Naive thymus-derived CD4-positive, alpha-beta T cell (primary cell): ENCODE measurements at regions of chr1 and their contacts with region 1.

Region 1: GRCh38 chr1:66331657-66332547 is 202.1 kb upstream of the SGIP1 start:
- DNase-seq: peak; percentile 20 to 55 (median 39)
- ATAC-seq: peak; percentile 35
- H3K4me3 ChIP-seq: peak overlapping the region; percentile 86
- H3K4me3 Mint-ChIP-seq: peak overlapping the region; percentile 90 to 99 (median 98)
- H3K27ac ChIP-seq: peak overlapping the region; percentile 92
- H3K27ac Mint-ChIP-seq: peak overlapping the region; percentile 95 to 100 (median 98)
- H3K4me1 ChIP-seq: peaks cover 31 to 36% of the 10 kb centered on the region in 2 donors
- H3K4me1 Mint-ChIP-seq: peaks cover 26 to 76% (median 58%) of the 10 kb centered on the region in 7 donors
- H3K27me3 ChIP-seq: no peaks in the 10 kb centered on the region
- H3K27me3 Mint-ChIP-seq: no peaks in the 10 kb centered on the region

Region 2: DNA sequence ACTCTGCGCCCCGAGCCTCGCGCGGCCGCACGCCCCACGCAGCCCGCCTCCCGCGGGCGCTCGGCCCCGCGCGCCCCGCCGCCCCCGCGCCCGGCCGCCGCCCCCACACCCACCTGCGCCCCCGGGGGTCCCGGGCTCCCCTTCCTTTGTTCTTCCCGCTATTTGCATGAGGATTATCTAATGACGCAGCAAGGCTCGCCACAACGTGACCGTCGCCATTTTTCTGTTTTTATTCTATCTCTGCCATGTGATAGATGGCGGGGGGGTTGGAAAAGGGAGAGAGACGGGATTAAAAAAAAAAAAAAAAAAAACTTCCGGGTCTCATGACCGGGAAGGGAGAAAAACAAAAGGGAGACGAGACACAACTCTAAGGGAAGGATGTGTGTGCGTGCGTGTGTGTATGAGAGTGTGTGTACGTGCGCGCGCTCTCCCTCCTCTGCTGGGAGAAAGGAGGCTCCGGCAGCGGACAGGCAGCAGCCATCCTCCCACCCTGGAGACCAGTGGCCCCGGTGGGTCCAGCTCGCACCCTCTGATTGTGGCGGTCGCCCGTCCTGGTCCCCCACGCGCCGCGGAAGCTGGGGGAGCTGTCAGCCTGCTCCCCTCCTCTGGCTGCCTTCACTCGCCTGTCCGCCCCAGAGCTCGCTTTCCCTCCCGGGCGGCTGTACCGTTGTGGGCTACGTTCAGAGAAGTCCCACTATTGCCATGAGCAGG is 1264.3 kb before region 1 on chr1:
- CTCF ChIA-PET with region 1: no interaction called
- POLR2A ChIA-PET with region 1: interaction called, 3 read pairs
- intact Hi-C with region 1: loop called in 1 of 2 experiments (anchors 10 kb)
- DNase-seq: peak; percentile 48 to 75 (median 67)
- ATAC-seq: peak; percentile 39
- H3K4me3 ChIP-seq: peak overlapping the region; percentile 78
- H3K4me3 Mint-ChIP-seq: peak overlapping the region; percentile 85 to 99 (median 97)
- H3K27ac ChIP-seq: peak overlapping the region; percentile 90
- H3K27ac Mint-ChIP-seq: peak overlapping the region; percentile 93 to 100 (median 100)
- H3K4me1 ChIP-seq: peaks cover 16 to 24% of the 10 kb centered on the region in 2 donors
- H3K4me1 Mint-ChIP-seq: peaks cover 43 to 62% (median 55%) of the 10 kb centered on the region in 7 donors
- H3K27me3 ChIP-seq: no peaks in the 10 kb centered on the region
- H3K27me3 Mint-ChIP-seq: no peaks in the 10 kb centered on the region

Region 3: DNA sequence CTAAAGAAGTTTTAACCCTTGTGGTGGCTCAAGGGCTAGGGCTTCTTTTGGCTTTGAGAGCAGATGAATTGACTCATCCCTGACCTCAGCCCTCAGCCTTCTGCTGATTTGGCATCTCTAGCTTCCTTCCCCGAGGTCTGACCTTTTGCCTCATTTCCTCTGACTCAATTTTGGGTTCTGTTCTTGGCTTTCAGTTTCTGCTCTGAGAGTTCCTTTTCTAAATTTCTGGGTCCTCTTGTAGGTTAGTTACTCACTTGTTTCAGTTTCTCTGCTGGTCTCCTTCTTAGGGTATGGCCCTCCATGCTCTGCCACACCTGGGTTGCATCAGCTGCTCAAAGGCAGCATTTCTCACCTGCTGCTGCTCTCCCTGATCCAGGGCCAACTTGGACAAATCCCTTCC is 519.8 kb before region 1 on chr1:
- CTCF ChIA-PET with region 1: no interaction called
- POLR2A ChIA-PET with region 1: no interaction called
- intact Hi-C with region 1: loop called in 1 of 2 experiments (anchors 5 kb)
- DNase-seq: peak in 1 of 9 donors; percentile 67
- ATAC-seq: peak; percentile 94
- H3K4me3 ChIP-seq: no peak overlapping the region
- H3K4me3 Mint-ChIP-seq: peak overlapping the region in 1 of 10 donors; percentile 3
- H3K27ac ChIP-seq: no peak overlapping the region
- H3K27ac Mint-ChIP-seq: peak overlapping the region in 1 of 9 donors; percentile 67
- H3K4me1 ChIP-seq: no peaks in the 10 kb centered on the region
- H3K4me1 Mint-ChIP-seq: peaks cover 0 to 26% (median 0%) of the 10 kb centered on the region in 7 donors
- H3K27me3 ChIP-seq: no peaks in the 10 kb centered on the region
- H3K27me3 Mint-ChIP-seq: peaks cover 18 to 24% (median 19%) of the 10 kb centered on the region in 5 donors

Region 4: DNA sequence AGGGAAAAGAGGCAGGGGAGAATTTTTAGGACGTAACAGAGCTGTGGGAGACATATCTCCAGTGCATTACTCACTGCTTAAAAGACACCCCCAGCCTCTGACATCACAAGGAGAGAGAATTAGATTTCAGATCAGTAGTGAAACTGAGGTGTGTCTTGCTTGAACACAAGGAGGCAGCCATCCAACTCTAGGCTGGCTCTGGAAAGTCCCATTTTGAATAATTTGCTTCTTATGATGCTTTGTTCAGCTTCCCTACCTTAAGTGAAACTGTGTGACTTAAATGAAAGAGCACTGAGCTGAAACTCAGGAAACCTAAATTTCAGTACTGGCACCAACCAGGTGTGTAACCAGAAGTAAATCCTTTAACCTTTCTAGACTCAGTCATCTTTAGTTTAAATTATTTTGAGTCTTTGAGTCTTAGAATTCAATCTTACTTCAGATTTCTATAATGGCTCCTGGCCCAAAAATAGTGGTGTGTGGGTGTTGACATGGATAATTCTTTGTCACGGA is 49.5 kb before region 1 on chr1:
- CTCF ChIA-PET with region 1: interaction called, 12 read pairs
- POLR2A ChIA-PET with region 1: interaction called, 97 read pairs
- intact Hi-C with region 1: loop called (anchors 1 kb)
- DNase-seq: peak in 8 of 9 donors; percentile 49 to 88 (median 68)
- ATAC-seq: peak; percentile 95
- H3K4me3 ChIP-seq: no peak overlapping the region
- H3K4me3 Mint-ChIP-seq: peak overlapping the region in 4 of 10 donors; percentile 12 to 57 (median 25)
- H3K27ac ChIP-seq: peak overlapping the region; percentile 64
- H3K27ac Mint-ChIP-seq: peak overlapping the region; percentile 70 to 93 (median 85)
- H3K4me1 ChIP-seq: peaks cover 49 to 59% of the 10 kb centered on the region in 2 donors
- H3K4me1 Mint-ChIP-seq: peaks cover 57 to 98% (median 89%) of the 10 kb centered on the region in 7 donors
- H3K27me3 ChIP-seq: no peaks in the 10 kb centered on the region
- H3K27me3 Mint-ChIP-seq: no peaks in the 10 kb centered on the region

Region 5: GRCh38 chr1:66374561-66375111 is 42.7 kb after region 1 on chr1:
- CTCF ChIA-PET with region 1: interaction called, 3 read pairs
- POLR2A ChIA-PET with region 1: interaction called, 11 read pairs
- intact Hi-C with region 1: loop called (anchors 1 kb)
- DNase-seq: peak in 7 of 9 donors; percentile 27 to 49 (median 40)
- ATAC-seq: peak; percentile 83
- H3K4me3 ChIP-seq: no peak overlapping the region
- H3K4me3 Mint-ChIP-seq: peak overlapping the region in 9 of 10 donors; percentile 46 to 83 (median 67)
- H3K27ac ChIP-seq: peak overlapping the region; percentile 62
- H3K27ac Mint-ChIP-seq: peak overlapping the region; percentile 88 to 96 (median 92)
- H3K4me1 ChIP-seq: peaks cover 51 to 53% of the 10 kb centered on the region in 2 donors
- H3K4me1 Mint-ChIP-seq: peaks cover 52 to 74% (median 65%) of the 10 kb centered on the region in 7 donors
- H3K27me3 ChIP-seq: no peaks in the 10 kb centered on the region
- H3K27me3 Mint-ChIP-seq: no peaks in the 10 kb centered on the region

Region 6: DNA sequence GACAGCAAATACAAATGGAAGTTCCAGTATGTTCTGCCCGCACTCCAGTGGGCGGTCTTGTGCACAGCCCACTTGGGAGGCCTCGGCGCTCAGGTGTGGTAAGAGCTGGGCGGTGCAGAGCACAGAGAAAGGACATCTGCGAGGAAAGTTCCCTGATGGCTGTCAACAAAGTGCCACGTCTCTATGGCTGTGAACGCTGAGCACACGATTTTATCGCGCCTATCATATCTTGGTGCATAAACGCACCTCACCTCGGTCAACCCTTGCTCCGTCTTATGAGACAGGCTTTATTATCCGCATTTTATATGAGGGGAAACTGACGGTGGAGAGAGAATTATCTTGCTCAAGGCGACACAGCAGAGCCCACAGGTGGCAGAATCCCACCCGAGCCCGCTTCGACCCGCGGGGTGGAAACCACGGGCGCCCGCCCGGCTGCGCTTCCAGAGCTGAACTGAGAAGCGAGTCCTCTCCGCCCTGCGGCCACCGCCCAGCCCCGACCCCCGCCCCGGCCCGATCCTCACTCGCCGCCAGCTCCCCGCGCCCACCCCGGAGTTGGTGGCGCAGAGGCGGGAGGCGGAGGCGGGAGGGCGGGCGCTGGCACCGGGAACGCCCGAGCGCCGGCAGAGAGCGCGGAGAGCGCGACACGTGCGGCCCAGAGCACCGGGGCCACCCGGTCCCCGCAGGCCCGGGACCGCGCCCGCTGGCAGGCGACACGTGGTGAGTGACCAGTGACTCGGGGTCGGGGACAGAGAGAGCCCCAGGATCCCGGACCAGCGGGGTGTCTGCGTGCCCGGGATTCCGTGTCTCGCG is 975.6 kb after region 1 on chr1 and contains the start of gene IL12RB2:
- CTCF ChIA-PET with region 1: no interaction called
- POLR2A ChIA-PET with region 1: no interaction called
- intact Hi-C with region 1: loop called in 1 of 2 experiments (anchors 10 kb)
- DNase-seq: peak in 7 of 9 donors; percentile 11 to 68 (median 18)
- ATAC-seq: peak; percentile 78
- H3K4me3 ChIP-seq: peak within 1 kb of the TSS; percentile 19
- H3K4me3 Mint-ChIP-seq: peak within 1 kb of the TSS; percentile 76 to 99 (median 84)
- H3K27ac ChIP-seq: no peak within 1 kb of the TSS
- H3K27ac Mint-ChIP-seq: peak within 1 kb of the TSS in 2 of 9 donors; percentile 56 to 99
- H3K4me1 ChIP-seq: peaks cover 0 to 5% of the 10 kb centered on the region in 2 donors
- H3K4me1 Mint-ChIP-seq: peaks cover 0 to 78% (median 9%) of the 10 kb centered on the region in 7 donors
- H3K27me3 ChIP-seq: no peaks in the 10 kb centered on the region
- H3K27me3 Mint-ChIP-seq: peaks cover 0 to 22% (median 10%) of the 10 kb centered on the region in 5 donors
- total RNA-seq, gene IL12RB2: 0.38 to 78.1 (median 1.1) TPM